Activated CD4-positive, alpha-beta T cell treated with anti-CD3 and anti-CD28 coated beads, Interleukin-2, amount 10 ng/mL, durations not matched to agents 7 days and 5 days (primary cell): ENCODE measurements at regions of chr3 and their contacts with region 1.

Region 1: GRCh38 chr3:32947789-32948238 is 3.6 kb upstream of the CCR4 start:
- DNase-seq: peak; percentile 95
- H3K4me3 Mint-ChIP-seq: no peak overlapping the region
- H3K27ac Mint-ChIP-seq: no peak overlapping the region
- H3K4me1 Mint-ChIP-seq: peaks cover 46% of the 10 kb centered on the region
- H3K27me3 Mint-ChIP-seq: no peaks in the 10 kb centered on the region

Region 2: DNA sequence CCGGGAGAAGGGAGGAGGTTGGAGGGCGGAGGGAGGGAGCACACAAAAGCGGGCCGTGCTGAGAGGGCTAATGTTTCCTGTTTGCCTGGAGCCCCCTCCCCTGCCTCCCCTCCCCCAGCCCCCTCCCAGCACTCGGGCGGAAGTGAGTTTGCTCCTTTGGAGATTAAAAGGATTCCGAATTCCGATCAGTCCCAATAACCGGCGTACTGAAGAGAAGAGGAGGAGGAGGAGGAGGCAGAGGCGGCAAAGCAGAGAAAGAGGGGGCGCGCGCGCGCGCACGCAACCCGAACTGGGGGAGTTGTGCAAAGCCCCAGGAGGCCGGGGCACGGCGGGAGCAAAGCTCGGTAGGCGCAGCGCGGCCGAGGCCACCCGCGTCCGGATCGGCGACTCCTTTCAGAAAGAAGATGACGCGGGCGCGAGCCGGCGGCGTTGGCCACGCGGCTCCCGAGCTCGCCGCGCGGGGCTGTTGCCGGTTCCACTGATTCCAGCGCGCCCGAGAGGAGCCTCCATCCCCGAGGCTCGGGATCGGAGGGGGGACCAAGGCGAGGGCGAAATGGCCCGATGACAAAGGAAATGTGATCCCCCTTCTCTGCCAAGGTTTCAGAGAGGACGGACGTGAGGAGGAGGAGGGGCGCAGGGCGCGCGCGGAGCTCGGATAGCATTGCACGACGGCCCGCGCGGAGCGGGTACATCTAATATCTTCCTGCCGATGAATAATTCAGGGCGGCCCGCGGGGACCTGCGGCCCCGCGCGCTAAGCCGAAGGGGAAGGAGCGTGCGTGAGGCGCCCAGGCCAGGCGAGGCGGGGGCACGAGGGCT is 131.2 kb before region 1 on chr3:
- CTCF ChIA-PET with region 1: no interaction called
- POLR2A ChIA-PET with region 1: no interaction called
- DNase-seq: peak; percentile 9
- H3K4me3 Mint-ChIP-seq: peak overlapping the region; percentile 63
- H3K27ac Mint-ChIP-seq: no peak overlapping the region
- H3K4me1 Mint-ChIP-seq: peaks cover 32% of the 10 kb centered on the region
- H3K27me3 Mint-ChIP-seq: peaks cover 66% of the 10 kb centered on the region

Region 3: GRCh38 chr3:32960404-32961170 is 12.8 kb after region 1 on chr3:
- CTCF ChIA-PET with region 1: interaction called, 28 read pairs
- POLR2A ChIA-PET with region 1: no interaction called
- DNase-seq: no peak
- H3K4me3 Mint-ChIP-seq: no peak overlapping the region
- H3K27ac Mint-ChIP-seq: peak overlapping the region; percentile 67
- H3K4me1 Mint-ChIP-seq: peaks cover 56% of the 10 kb centered on the region
- H3K27me3 Mint-ChIP-seq: no peaks in the 10 kb centered on the region